GM10248 (cell line): ENCODE measurements at regions of chr11 and their contacts with region 1.

Region 1: GRCh38 chr11:119284344-119285157 is 32.4 kb downstream of the MCAM start:
- DNase-seq: peak; percentile 68
- CTCF ChIP-seq: peak; percentile 59

Region 2: DNA sequence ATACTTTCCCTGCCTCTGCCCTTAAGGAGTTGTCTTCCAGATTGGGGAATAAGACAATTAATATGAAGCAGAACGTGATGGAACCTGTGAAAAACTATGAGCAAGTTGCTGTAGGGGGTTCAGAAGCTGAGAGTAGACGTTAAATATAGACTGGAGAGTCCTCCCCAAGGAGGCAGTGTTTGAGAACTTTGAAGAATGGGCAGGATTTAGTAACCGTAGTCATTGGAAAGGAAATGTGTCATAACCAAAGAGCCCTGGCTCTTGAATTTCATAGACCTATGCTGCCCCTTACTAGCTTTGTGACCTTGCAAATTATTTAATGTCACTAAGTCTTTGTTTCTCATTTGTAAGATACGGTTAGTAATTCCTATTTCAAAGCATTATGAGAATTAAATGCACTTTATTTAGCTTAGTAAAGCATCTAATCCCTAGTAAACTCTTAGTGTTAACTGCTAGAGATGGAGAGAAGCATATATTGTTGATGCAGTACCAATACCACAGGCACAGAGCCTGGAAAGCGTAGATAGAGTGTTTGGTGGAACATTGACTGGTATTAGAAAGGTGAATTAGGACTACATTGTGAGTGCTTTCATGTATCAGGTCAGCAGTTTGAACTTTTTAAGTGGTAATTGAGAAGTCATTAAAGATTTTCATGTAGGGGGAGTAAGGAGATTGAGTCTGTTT is 21.7 kb before region 1 on chr11:
- CTCF ChIA-PET with region 1: interaction called, 10 read pairs
- POLR2A ChIA-PET with region 1: no interaction called
- DNase-seq: peak; percentile 19
- CTCF ChIP-seq: no peak

Region 3: DNA sequence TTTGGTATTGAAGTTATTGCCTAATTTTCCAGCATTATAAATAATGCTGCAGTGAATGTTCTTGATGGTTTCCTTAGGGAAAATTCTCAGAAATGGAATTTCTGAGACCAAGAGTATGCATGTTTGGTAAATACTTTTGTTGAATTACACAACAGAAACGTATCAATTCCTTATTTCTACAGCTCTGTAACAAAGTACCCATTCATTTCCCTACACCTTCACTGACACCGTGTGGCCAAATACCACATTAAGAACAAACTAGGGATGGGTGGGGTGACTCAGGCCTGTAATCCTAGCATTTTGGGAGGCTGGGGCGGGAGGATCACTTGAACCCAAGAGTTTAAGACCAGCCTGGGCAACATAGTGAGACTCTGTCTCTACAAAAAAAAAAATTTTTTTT is 10.6 kb after region 1 on chr11:
- CTCF ChIA-PET with region 1: interaction called, 18 read pairs
- POLR2A ChIA-PET with region 1: no interaction called
- DNase-seq: no peak
- CTCF ChIP-seq: peak; percentile 21

Region 4: GRCh38 chr11:119445850-119446249 is 161.3 kb after region 1 on chr11:
- CTCF ChIA-PET with region 1: no interaction called
- POLR2A ChIA-PET with region 1: no interaction called
- DNase-seq: no peak
- CTCF ChIP-seq: no peak